GM13977 (cell line): ENCODE measurements at regions of chr2 and their contacts with region 1.

Region 1: DNA sequence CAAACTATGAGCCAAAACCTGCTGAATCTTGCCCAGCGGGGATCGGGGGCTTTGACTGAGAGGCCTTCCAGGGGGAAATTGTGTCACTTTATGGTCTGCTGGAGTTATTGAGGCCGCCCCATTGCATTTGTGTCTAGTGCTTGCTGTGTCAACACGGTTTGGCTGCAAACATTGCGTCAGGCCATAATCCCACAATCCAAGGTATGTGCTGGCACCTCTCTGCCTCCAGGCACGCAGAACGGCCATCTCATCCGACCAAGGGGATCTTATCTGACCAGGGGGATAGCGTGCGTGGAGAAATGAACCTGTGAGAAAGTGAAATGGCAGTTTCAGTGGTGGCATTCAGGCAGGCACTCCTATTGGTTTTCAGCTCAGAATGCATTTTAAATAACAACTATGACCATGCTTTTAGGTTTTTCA is 18.1 kb upstream of the LYPD6B start:
- DNase-seq: no peak
- CTCF ChIP-seq: no peak

Region 2: GRCh38 chr2:149561309-149561926 is 541.0 kb after region 1 on chr2:
- in situ Hi-C with region 1: loop called (anchors 10 kb)
- DNase-seq: peak; percentile 32
- CTCF ChIP-seq: peak; percentile 73